Activated naive CD8-positive, alpha-beta T cell treated with anti-CD3 and anti-CD28 coated beads, Interleukin-2, amount 10 ng/mL, durations not matched to agents 7 days and 5 days (primary cell): ENCODE measurements at regions of chr17 and their contacts with region 1.

Region 1: DNA sequence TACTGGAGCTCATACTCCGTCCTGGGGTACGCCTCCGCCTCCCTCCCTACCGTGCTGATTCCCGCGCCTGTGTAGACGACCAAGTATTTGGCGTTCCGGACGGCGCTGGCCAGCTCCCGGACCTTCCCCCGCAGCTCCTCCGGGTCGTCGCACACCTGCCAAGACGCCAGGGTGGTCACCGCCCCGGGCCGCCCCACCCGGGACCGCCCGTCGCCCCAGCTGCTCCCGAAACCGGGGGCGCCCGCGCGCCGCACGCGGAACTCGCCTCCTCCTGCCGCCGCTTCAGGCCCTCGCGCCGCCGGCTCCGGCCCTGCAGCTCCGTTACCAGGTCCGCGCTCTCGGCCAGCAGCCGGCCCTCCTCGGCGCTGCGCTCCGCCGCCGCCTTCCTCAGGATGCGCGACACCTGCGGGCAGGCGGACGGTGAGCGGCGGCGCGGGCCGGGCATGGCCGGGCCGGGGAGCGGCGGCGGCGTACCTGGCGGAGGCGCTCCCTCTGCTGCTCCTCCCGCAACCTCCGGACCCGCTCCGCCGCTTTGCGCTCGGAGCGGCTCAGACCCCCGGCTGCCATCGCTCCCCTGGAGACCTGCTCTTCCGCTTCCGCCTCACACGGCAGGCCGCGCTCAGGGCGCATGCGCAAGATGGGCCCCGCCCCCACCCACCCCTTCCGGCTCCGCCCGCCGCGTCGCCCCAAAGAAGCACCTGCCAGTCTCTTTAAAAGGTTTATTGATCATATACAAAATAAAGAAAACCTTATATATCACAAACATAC is at the start of gene SIRT7:
- DNase-seq: peak; percentile 87
- ATAC-seq: peak; percentile 84
- H3K4me3 Mint-ChIP-seq: peak within 1 kb of the TSS; percentile 91
- H3K27ac Mint-ChIP-seq: peak within 1 kb of the TSS; percentile 86
- H3K4me1 Mint-ChIP-seq: peaks cover 17% of the 10 kb centered on the region
- H3K27me3 Mint-ChIP-seq: no peaks in the 10 kb centered on the region
- total RNA-seq, gene SIRT7: 64.8 to 65.2 TPM

Region 2: DNA sequence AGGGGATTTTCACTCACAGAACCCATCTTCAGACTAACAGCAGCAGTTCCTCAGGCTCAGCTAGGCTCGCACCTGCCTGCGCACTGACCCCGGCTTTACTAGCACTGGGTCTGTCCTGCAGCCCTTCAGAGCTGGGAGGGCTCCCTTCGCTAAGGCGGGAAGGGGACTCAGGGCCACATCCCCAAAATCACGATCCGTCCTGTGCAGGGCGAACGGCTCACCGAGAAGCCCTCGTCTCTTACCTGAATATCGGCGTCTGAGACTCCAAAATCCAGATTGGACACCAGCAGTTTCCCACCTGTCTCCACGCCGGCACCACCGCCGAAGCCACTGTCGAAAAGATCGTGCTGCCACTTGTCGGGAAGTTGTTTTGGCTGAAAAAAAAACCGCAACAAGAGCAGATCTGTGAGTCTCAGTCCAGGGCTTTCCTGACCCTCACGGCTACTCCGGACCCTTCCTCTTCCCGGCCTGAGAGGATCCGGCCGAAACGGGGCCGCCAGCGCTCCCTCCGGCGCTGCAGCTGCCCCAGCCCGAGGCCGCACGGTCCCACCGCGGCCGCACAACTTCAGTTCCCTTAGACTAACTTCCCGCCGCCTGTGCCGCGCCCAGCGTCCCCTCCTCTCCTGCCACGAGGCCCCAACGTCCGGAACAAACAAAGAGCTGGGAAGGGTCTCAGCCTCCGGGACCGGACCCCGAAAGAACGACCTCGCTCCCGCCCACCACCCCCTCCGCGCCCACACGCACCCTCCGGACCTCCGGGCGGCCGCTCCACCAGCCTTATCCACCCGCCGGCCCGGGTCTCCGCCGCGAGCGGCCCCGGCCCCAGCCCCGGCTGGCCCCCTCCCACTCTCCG is 27.1 kb before region 1 on chr17:
- POLR2A ChIA-PET with region 1: interaction called, 18 read pairs
- DNase-seq: peak; percentile 58
- ATAC-seq: no peak
- H3K4me3 Mint-ChIP-seq: peak overlapping the region; percentile 87
- H3K27ac Mint-ChIP-seq: peak overlapping the region; percentile 94
- H3K4me1 Mint-ChIP-seq: peaks cover 11% of the 10 kb centered on the region
- H3K27me3 Mint-ChIP-seq: no peaks in the 10 kb centered on the region